ENCODE measurements at regions of chr15 and their contacts with region 1.

Region 1: DNA sequence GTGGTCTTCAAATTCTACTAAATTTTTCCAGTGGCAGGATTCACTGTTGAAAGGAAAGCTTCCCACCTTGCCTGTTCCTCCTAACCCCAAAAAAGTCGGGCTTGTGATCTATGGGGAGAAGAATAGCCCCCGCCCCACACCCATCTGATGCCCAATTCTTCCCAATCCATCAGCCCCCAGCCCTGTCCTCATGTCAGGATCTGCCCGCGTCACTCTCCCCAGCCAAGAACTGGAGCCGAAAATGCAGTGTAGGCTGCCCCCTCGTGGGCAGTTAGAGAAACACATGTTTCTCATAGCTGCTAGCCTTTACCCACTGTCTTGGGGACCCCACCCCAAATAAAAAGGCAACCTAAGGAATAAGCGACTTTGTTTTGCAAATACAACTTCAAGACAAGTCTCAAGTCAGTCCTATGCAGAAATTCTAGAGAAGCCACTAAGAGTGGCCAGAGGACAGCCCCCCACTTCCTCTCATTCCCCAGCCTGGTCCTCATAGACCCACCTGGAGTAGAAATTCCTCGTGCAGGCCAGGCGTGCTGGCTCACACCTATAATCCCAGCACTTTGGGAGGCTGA is 13.0 kb upstream of the CSK start:
- DNase-seq: peak; percentile 50 to 76 (median 58)
- H3K4me3 ChIP-seq: no peak overlapping the region
- H3K4me3 Mint-ChIP-seq: peak overlapping the region in 1 of 7 donors; percentile 35
- H3K27ac ChIP-seq: no peak overlapping the region
- H3K27ac Mint-ChIP-seq: peak overlapping the region in 3 of 8 donors; percentile 3 to 21 (median 17)
- H3K4me1 ChIP-seq: peaks cover 17% of the 10 kb centered on the region
- H3K4me1 Mint-ChIP-seq: peaks cover 13 to 23% (median 20%) of the 10 kb centered on the region in 3 donors
- H3K27me3 ChIP-seq: no peaks in the 10 kb centered on the region
- H3K27me3 Mint-ChIP-seq: peaks cover 5 to 8% of the 10 kb centered on the region in 2 donors

Region 2: DNA sequence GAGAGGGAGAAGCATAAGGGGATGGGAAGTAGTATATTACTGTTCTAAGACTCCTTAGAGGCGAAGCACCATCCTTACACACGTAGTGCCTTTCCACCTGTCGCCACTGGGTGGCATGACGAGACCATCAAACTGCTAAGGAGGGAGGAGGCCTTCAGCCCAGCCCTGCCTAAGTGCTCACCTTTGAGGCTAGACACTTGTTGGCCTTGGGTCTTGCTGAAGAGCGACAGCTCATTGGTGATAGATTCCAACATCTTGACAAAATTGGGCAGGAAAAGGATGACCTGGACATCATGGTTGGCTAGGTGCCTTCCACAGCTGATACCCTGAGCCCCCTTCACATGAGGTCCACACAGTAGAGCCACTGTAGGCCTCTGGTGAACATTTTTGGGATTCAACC is 133.6 kb before region 1 on chr15:
- CTCF ChIA-PET with region 1: interaction called, 180 read pairs
- POLR2A ChIA-PET with region 1: interaction called, 3 read pairs
- DNase-seq: peak; percentile 48 to 81 (median 56)
- H3K4me3 ChIP-seq: no peak overlapping the region
- H3K4me3 Mint-ChIP-seq: no peak overlapping the region
- H3K27ac ChIP-seq: no peak overlapping the region
- H3K27ac Mint-ChIP-seq: peak overlapping the region in 6 of 8 donors; percentile 4 to 77 (median 50)
- H3K4me1 ChIP-seq: no peaks in the 10 kb centered on the region
- H3K4me1 Mint-ChIP-seq: peaks cover 0 to 2% (median 2%) of the 10 kb centered on the region in 3 donors
- H3K27me3 ChIP-seq: no peaks in the 10 kb centered on the region
- H3K27me3 Mint-ChIP-seq: no peaks in the 10 kb centered on the region

Region 3: GRCh38 chr15:74781431-74782258 is 12.8 kb after region 1 on chr15 and contains the start of gene CSK:
- CTCF ChIA-PET with region 1: interaction called, 1,086 read pairs
- POLR2A ChIA-PET with region 1: interaction called, 25 read pairs
- DNase-seq: peak; percentile 76 to 87 (median 83)
- H3K4me3 ChIP-seq: peak within 1 kb of the TSS; percentile 99
- H3K4me3 Mint-ChIP-seq: peak within 1 kb of the TSS; percentile 85 to 98 (median 95)
- H3K27ac ChIP-seq: peak within 1 kb of the TSS; percentile 74
- H3K27ac Mint-ChIP-seq: peak within 1 kb of the TSS; percentile 93 to 100 (median 98)
- H3K4me1 ChIP-seq: peaks cover 66% of the 10 kb centered on the region
- H3K4me1 Mint-ChIP-seq: peaks cover 71 to 81% (median 76%) of the 10 kb centered on the region in 3 donors
- H3K27me3 ChIP-seq: no peaks in the 10 kb centered on the region
- H3K27me3 Mint-ChIP-seq: peaks cover 0 to 5% of the 10 kb centered on the region in 2 donors
- total RNA-seq, gene CSK: 288 to 294 TPM

Region 4: DNA sequence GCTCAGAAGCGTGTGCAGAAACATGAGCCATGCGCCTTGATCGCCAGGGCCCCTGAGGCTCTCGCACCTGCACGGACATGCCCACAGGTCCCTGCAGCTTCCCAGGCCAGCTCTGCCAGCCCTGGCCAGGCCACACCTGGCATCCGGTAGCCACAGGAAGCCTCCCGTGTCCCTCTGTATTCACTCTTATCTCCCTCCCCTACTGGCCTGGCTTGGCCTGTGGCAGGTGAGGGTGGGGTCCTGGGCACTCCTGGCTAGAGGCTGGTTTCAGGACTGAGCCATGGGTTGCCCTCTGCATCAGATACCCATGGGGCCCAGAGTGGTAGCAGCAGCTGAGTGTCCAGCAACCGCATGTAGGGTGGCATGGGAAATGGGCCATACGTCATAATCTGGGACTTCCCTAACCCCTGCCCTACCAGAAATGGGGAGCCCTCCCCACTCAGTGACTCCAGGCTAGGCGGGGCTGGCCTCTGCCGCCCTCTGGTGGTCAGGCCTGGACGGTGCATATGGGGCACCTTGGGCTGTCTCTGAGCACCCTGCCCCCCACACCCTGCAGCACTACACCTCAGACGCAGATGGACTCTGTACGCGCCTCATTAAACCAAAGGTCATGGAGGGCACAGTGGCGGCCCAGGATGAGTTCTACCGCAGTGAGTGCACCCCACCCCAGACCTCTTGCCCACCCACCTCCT is 31.1 kb after region 1 on chr15:
- CTCF ChIA-PET with region 1: interaction called, 1,086 read pairs
- POLR2A ChIA-PET with region 1: interaction called, 13 read pairs
- DNase-seq: peak; percentile 81 to 91 (median 85)
- H3K4me3 ChIP-seq: peak overlapping the region; percentile 32
- H3K4me3 Mint-ChIP-seq: peak overlapping the region in 6 of 7 donors; percentile 19 to 40 (median 26)
- H3K27ac ChIP-seq: peak overlapping the region; percentile 65
- H3K27ac Mint-ChIP-seq: peak overlapping the region; percentile 79 to 97 (median 94)
- H3K4me1 ChIP-seq: peaks cover 57% of the 10 kb centered on the region
- H3K4me1 Mint-ChIP-seq: peaks cover 42 to 53% (median 48%) of the 10 kb centered on the region in 3 donors
- H3K27me3 ChIP-seq: no peaks in the 10 kb centered on the region
- H3K27me3 Mint-ChIP-seq: no peaks in the 10 kb centered on the region

Region 5: GRCh38 chr15:74842581-74843444 is 74.0 kb after region 1 on chr15 and contains the start of gene ULK3:
- CTCF ChIA-PET with region 1: interaction called, 10 read pairs
- POLR2A ChIA-PET with region 1: no interaction called
- DNase-seq: peak; percentile 91 to 93 (median 91)
- H3K4me3 ChIP-seq: peak within 1 kb of the TSS; percentile 88
- H3K4me3 Mint-ChIP-seq: peak within 1 kb of the TSS; percentile 83 to 96 (median 88)
- H3K27ac ChIP-seq: peak within 1 kb of the TSS; percentile 72
- H3K27ac Mint-ChIP-seq: peak within 1 kb of the TSS; percentile 87 to 98 (median 93)
- H3K4me1 ChIP-seq: peaks cover 48% of the 10 kb centered on the region
- H3K4me1 Mint-ChIP-seq: peaks cover 47 to 59% (median 50%) of the 10 kb centered on the region in 3 donors
- H3K27me3 ChIP-seq: no peaks in the 10 kb centered on the region
- H3K27me3 Mint-ChIP-seq: no peaks in the 10 kb centered on the region
- total RNA-seq, gene ULK3: 53.9 to 60.1 TPM

Region 6: GRCh38 chr15:74950078-74951000 is 181.5 kb after region 1 on chr15:
- CTCF ChIA-PET with region 1: interaction called, 56 read pairs
- POLR2A ChIA-PET with region 1: no interaction called
- DNase-seq: peak; percentile 64 to 82 (median 69)
- H3K4me3 ChIP-seq: no peak overlapping the region
- H3K4me3 Mint-ChIP-seq: peak overlapping the region in 1 of 7 donors; percentile 1
- H3K27ac ChIP-seq: no peak overlapping the region
- H3K27ac Mint-ChIP-seq: no peak overlapping the region
- H3K4me1 ChIP-seq: peaks cover 3% of the 10 kb centered on the region
- H3K4me1 Mint-ChIP-seq: peaks cover 0 to under 1% (median 0%) of the 10 kb centered on the region in 3 donors
- H3K27me3 ChIP-seq: no peaks in the 10 kb centered on the region
- H3K27me3 Mint-ChIP-seq: peaks cover 0 to 3% of the 10 kb centered on the region in 2 donors

Region 7: DNA sequence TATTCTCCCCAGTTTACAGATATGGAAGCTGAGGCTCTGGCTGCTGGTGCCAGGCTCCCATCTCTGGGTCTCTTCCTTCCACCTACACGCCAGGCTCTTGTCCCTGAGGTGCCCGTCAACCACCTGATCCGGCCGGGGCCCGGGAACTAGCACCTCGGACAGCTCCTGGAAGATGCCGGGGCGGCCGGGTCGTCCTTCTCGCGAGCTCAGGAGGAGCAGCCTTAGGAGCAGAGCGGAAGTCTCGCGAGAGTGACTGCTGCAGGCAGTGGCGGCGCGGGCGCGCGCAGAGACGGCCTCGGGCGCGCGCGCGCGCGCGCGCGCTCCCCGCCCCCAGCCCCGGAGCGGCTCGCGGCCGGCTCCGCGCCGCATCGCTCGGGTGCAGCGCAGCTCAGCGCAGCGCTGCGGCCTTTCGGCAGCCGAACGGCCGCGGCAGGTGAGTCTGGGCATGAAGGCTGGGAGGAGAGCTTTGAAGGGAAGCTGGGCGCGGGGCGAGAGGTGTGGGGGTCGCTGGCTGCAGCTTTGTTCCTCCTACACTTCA is 226.5 kb after region 1 on chr15 and contains the start of gene SCAMP5:
- CTCF ChIA-PET with region 1: no interaction called
- POLR2A ChIA-PET with region 1: no interaction called
- DNase-seq: peak; percentile 82 to 93 (median 85)
- H3K4me3 ChIP-seq: peak within 1 kb of the TSS; percentile 60
- H3K4me3 Mint-ChIP-seq: peak within 1 kb of the TSS; percentile 80 to 89 (median 84)
- H3K27ac ChIP-seq: no peak within 1 kb of the TSS
- H3K27ac Mint-ChIP-seq: peak within 1 kb of the TSS in 3 of 8 donors; percentile 46 to 70 (median 65)
- H3K4me1 ChIP-seq: peaks cover 18% of the 10 kb centered on the region
- H3K4me1 Mint-ChIP-seq: peaks cover 12 to 18% (median 13%) of the 10 kb centered on the region in 3 donors
- H3K27me3 ChIP-seq: peaks cover 24% of the 10 kb centered on the region
- H3K27me3 Mint-ChIP-seq: peaks cover 30 to 40% of the 10 kb centered on the region in 2 donors
- total RNA-seq, gene SCAMP5: 0.74 to 1.1 TPM